ENCODE measurements at regions of chr1 and their contacts with region 1.

Region 1: DNA sequence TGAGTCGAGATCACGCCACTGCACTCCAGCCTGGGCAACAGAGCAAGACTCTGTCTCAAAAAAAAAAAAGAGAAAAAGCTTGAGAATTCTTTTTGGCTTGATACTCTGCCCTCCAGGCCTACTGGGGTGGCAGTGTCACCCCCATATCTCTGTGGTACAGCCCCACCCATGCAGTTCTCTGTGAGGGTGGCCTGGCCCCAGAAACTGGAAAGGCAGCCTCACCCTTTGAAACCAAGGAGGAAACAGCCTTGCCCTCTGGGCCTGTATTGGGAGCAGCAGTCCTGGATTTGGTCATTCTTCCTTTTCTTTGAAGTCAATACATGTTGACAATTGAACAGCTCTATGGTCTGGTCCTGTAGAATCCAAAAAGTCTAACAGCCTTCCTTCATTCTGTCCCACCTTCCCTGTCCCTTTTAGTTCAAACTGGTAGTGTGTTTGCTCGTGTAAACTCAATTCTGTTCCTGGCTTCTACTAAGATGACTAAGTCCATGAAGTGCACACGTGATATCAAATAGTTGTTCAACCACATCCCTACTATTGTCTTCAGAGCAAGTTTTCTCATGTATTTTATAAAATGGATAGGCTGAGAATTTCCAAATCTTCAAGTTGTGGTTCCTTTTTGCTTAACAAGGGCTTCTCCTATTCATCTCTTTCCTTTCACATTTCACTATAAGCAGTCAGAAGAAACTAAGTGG is 13.2 kb downstream of the ST7L start:
- DNase-seq: no peak
- ATAC-seq: peak; percentile 71
- H3K4me3 Mint-ChIP-seq: no peak overlapping the region
- H3K27ac Mint-ChIP-seq: peak overlapping the region; percentile 13
- H3K4me1 Mint-ChIP-seq: peaks cover 8% of the 10 kb centered on the region
- H3K27me3 Mint-ChIP-seq: no peaks in the 10 kb centered on the region

Region 2: GRCh38 chr1:112651205-112651604 is 45.4 kb after region 1 on chr1:
- CTCF ChIA-PET with region 1: no interaction called
- POLR2A ChIA-PET with region 1: interaction called, 14 read pairs
- intact Hi-C with region 1: no loop called
- DNase-seq: no peak
- ATAC-seq: peak; percentile 77
- H3K4me3 Mint-ChIP-seq: no peak overlapping the region
- H3K27ac Mint-ChIP-seq: peak overlapping the region; percentile 87
- H3K4me1 Mint-ChIP-seq: peaks cover 22% of the 10 kb centered on the region
- H3K27me3 Mint-ChIP-seq: no peaks in the 10 kb centered on the region

Measured in activated CD4-positive, alpha-beta T cell treated with anti-CD3 and anti-CD28 coated beads for 36 hours (primary cell).